ENCODE measurements at regions of chr2 and their contacts with region 1.

Region 1: DNA sequence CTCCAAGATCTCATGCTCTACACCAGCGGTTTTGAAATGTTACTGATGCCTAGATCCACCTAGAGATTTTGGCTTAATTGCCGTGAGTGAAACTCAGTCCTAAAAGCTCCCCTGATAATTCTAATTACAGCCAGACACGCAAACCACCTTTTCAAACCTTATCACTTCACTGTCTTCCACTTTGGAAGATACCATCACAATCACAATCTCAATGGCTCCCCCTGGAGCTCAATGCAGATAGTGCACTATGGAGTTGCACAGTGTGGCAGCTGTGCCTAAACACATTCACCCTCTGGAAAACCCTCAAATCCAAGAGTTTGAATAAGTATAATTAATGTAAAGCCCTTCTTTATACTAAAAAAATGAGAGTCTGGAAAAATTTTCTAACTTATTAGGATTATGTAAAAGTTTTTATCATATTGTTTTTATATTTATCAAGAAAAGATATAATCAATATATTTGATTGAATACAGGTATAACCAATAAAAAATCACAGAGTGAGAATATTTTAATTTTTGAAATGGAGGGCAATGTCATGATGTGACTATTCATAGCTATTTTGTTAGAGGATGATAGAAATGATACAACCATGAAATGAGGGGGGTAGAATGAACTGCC is 102.9 kb upstream of the SLC8A1 start:
- DNase-seq: peak; percentile 58 to 91 (median 76)
- H3K4me3 ChIP-seq: no peak overlapping the region
- H3K27ac ChIP-seq: no peak overlapping the region
- H3K4me1 ChIP-seq: no peaks in the 10 kb centered on the region
- H3K27me3 ChIP-seq: no peaks in the 10 kb centered on the region
- CTCF ChIP-seq: peak; percentile 83 to 94 (median 88)
- POLR2A ChIP-seq: no peak

Region 2: DNA sequence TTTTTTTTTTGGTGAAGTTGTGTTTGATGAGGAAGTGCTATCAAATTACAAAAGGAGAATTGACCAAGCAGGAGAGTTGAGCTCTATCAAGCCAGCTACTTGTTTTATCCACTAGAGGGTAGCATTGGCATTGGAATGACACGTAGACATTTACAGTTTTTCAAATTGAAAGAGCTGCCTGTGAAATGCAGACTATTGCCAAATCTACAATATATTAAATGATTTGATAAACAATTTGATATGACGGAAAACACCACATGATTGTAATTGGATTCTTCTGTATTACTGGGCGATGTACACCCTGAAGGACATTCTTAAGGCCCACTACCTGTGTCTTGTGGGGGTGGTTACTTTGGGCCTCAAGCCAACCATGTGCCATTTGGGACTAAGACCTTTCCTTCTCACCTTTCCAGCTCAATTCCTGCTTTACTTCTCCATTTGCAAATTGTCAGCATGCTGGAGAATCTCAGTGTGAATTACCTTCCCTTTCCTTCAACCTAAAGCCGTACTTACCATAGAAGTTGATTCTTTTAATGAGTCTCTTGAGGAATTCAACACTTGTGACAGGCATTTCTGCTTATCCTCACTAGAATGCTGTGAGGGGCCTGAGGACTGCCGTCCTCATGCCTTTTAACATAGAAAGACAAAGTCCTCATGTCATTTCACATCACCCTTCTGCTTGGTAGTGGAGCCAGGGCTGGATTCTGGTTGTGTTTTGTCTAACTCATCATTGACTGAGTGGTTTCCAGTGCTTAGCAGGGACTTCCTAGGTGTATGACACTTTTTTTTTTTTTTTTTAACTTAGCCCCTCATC is 640.9 kb before region 1 on chr2:
- intact Hi-C with region 1: loop called in 1 of 2 experiments (anchors 5 kb)
- DNase-seq: peak in 1 of 7 donors; percentile 20
- H3K4me3 ChIP-seq: no peak overlapping the region
- H3K27ac ChIP-seq: no peak overlapping the region
- H3K4me1 ChIP-seq: no peaks in the 10 kb centered on the region
- H3K27me3 ChIP-seq: no peaks in the 10 kb centered on the region
- CTCF ChIP-seq: peak; percentile 71 to 84 (median 80)
- POLR2A ChIP-seq: no peak

Region 3: GRCh38 chr2:40212804-40213470 is 341.8 kb before region 1 on chr2:
- intact Hi-C with region 1: loop called (anchors 10 kb)
- DNase-seq: no peak
- H3K4me3 ChIP-seq: no peak overlapping the region
- H3K27ac ChIP-seq: no peak overlapping the region
- H3K4me1 ChIP-seq: peaks cover 0 to 7% of the 10 kb centered on the region in 2 donors
- H3K27me3 ChIP-seq: no peaks in the 10 kb centered on the region
- CTCF ChIP-seq: peak; percentile 24 to 56 (median 48)
- POLR2A ChIP-seq: no peak

Region 4: DNA sequence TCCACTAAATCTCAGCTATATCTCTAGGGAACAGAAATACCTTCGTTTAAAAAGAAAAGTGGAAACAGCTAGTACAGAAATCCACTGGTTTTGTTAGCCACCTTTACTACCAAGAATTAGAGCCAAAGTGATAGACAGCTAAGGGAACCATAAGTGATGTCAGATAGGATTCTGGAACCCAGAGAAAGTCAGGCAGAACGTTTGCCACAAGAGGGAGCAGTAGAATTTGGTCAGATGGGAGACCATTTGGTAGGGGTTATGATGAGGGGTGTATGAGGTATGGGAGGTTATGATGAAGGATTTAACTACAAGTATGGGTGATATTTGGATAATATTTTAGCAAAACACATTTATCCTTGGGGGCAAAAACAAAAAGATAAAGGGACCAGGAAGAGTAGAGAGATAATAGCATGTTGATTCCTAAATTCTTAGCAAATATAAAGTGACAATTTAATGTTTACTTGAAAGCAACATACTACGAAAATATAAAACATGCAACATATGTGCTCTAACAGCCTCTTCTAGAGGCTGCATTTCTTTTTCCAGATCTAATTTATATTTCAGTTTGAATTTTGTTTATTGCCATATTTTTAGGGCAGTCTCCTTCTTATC is 106.2 kb before region 1 on chr2:
- intact Hi-C with region 1: loop called in 1 of 2 experiments (anchors 5 kb)
- DNase-seq: peak in 2 of 7 donors; percentile 9 to 57
- H3K4me3 ChIP-seq: no peak overlapping the region
- H3K27ac ChIP-seq: no peak overlapping the region
- H3K4me1 ChIP-seq: peaks cover 8 to 11% of the 10 kb centered on the region in 2 donors
- H3K27me3 ChIP-seq: no peaks in the 10 kb centered on the region
- CTCF ChIP-seq: peak in 5 of 6 experiments; percentile 17 to 56 (median 43)
- POLR2A ChIP-seq: no peak